HepG2 (cell line): ENCODE measurements at regions of chr7 and their contacts with region 1.

Region 1: GRCh38 chr7:100965723-100966541 is 3.4 kb upstream of the MUC12 start:
- DNase-seq: peak; percentile 57
- ATAC-seq: peak; percentile 91
- H3K4me3 ChIP-seq: peak overlapping the region in 1 of 3 experiments; percentile 38; a peak in 1 of 6 replicates
- H3K27ac ChIP-seq: no peak overlapping the region
- H3K4me1 ChIP-seq: 0 out of 2 replicates have a peak, but pooled peaks cover 10% of the 10 kb centered on the region
- H3K27me3 ChIP-seq: peaks cover 10 to 33% of the 10 kb centered on the region in 2 experiments
- CTCF ChIP-seq: peak; percentile 91
- EP300 ChIP-seq: no peak
- POLR2A ChIP-seq: no peak
- RAD21 ChIP-seq: peak; percentile 91

Region 2: DNA sequence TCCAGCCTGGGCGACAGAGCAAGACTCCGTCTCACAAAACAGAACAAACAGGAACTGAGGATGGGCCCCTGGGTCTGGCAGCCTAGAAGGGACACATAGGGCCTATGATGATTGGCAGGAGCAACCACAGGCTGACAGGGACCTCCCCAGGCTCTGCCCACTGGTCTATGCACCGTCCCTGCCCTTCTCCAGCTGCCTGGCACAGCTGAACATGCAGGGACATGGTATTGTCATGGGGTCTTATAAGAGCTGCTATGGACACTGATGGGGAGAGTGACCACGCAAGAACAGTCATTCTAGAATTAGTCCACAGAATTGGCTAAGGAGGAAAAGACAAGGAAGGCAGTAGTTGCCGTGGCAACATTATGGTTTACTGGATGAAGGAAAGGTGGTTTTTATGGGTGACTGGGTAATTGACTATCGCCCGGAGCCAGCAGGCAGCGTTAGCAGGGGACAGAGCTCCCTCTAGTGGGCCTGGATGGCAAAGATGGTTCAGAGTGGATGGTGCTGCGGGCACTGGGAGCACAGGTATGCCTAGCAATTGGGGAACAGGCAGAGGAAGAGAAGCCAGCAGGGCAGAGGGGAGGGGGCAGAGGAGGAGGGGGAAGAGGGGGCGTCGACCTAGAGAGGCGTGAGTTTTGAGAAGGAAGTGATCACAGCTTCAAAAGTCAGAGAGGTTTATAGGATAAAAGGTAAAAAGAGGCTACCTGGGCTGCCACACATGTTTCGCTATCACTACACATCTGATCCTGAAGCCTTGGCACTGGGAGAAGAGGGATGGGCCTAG is 111.6 kb after region 1 on chr7:
- CTCF ChIA-PET with region 1: interaction called, 3 read pairs
- POLR2A ChIA-PET with region 1: no interaction called
- in situ Hi-C with region 1: no loop called
- intact Hi-C with region 1: loop called (anchors 2 kb)
- DNase-seq: peak; percentile 48
- ATAC-seq: peak; percentile 99
- H3K4me3 ChIP-seq: no peak overlapping the region
- H3K27ac ChIP-seq: no peak overlapping the region
- H3K4me1 ChIP-seq: peaks cover 16% of the 10 kb centered on the region
- H3K27me3 ChIP-seq: 0 out of 5 replicates have a peak, but pooled peaks cover 0 to 3% of the 10 kb centered on the region in 2 experiments
- CTCF ChIP-seq: peak; percentile 94
- EP300 ChIP-seq: no peak
- POLR2A ChIP-seq: no peak
- RAD21 ChIP-seq: peak; percentile 78

Region 3: DNA sequence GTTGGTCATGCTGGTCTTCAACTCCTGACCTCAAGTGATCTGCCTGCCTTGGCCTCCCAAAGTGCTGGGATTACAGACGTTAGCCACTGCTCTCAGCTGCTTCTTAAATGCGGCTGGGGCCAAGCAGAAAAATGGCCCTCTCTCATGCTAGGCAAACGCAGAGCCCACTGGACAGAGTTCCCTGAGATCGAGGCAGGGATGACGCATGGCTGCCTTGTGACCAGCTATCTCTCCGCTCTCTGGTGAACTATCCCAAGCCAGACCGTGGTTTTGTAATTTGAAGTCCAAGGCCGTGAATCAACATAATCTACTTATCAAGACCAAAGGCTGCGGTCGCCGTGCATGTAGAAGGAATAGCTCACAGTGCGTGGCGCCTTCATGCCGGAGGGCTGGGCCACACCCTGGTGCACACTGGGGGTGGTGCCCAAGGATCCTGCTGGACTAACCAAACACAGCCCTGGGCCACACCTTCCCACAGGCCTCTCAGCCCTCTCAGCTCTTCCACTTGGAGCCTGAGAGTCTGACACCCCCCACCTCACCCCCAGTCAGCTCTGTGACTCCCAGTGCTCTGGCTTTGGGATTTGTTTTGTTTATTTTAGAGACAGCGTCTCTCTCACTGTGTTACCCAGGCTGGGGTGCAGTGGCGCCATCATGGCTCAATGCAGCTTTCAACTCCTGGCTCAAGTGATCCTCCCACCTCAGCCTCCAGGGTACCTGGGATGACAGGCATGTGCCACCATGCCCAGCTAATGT is 763.5 kb after region 1 on chr7:
- CTCF ChIA-PET with region 1: no interaction called
- POLR2A ChIA-PET with region 1: no interaction called
- in situ Hi-C with region 1: no loop called
- intact Hi-C with region 1: no loop called
- DNase-seq: peak; percentile 80
- ATAC-seq: peak; percentile 75
- H3K4me3 ChIP-seq: peak overlapping the region in 1 of 3 experiments; percentile 43; a peak in 1 of 6 replicates
- H3K27ac ChIP-seq: no peak overlapping the region
- H3K4me1 ChIP-seq: peaks cover 32% of the 10 kb centered on the region
- H3K27me3 ChIP-seq: peaks cover 0 to 13% of the 10 kb centered on the region in 2 experiments; a peak in 3 of 5 replicates
- CTCF ChIP-seq: no peak
- EP300 ChIP-seq: no peak
- POLR2A ChIP-seq: no peak
- RAD21 ChIP-seq: no peak